Breast epithelium (tissue), 4 donors: ENCODE measurements at regions of chr13 and their contacts with region 1.

Region 1: DNA sequence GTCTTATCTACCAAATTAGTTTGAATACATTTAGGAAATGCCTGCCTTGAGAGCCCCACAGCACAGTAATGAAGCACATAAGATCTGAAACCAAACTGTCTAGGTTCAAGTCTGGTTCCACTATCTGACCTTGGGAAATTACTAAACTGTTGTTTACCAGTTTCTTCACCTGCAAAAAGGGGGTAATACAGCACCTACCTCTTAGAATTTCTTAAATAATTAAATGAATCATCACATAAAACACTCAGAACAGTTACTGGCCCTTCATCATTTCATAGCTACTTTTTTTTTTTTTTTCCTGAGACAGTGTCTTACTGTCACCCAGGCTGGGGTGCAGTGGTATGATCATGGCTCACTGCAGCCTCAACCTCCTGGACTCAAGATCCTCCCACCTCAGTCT is 59.6 kb downstream of the USP12 start:
- DNase-seq: no peak
- H3K4me3 ChIP-seq: no peak overlapping the region
- H3K27ac ChIP-seq: no peak overlapping the region
- H3K4me1 ChIP-seq: no peaks in the 10 kb centered on the region
- H3K27me3 ChIP-seq: no peaks in the 10 kb centered on the region
- CTCF ChIP-seq: no peak
- POLR2A ChIP-seq: no peak

Region 2: GRCh38 chr13:26831336-26831908 is 280.6 kb before region 1 on chr13:
- intact Hi-C with region 1: no loop called
- DNase-seq: no peak
- H3K4me3 ChIP-seq: no peak overlapping the region
- H3K27ac ChIP-seq: no peak overlapping the region
- H3K4me1 ChIP-seq: no peaks in the 10 kb centered on the region
- H3K27me3 ChIP-seq: no peaks in the 10 kb centered on the region
- CTCF ChIP-seq: no peak
- POLR2A ChIP-seq: no peak

Region 3: GRCh38 chr13:26847281-26847680 is 264.7 kb before region 1 on chr13:
- intact Hi-C with region 1: loop called (anchors 5 kb)
- DNase-seq: no peak
- H3K4me3 ChIP-seq: no peak overlapping the region
- H3K27ac ChIP-seq: no peak overlapping the region
- H3K4me1 ChIP-seq: no peaks in the 10 kb centered on the region
- H3K27me3 ChIP-seq: no peaks in the 10 kb centered on the region
- CTCF ChIP-seq: no peak
- POLR2A ChIP-seq: no peak

Region 4: GRCh38 chr13:28229522-28230411 is 1117.8 kb after region 1 on chr13:
- intact Hi-C with region 1: no loop called
- DNase-seq: no peak
- H3K4me3 ChIP-seq: no peak overlapping the region
- H3K27ac ChIP-seq: no peak overlapping the region
- H3K4me1 ChIP-seq: no peaks in the 10 kb centered on the region
- H3K27me3 ChIP-seq: no peaks in the 10 kb centered on the region
- CTCF ChIP-seq: no peak
- POLR2A ChIP-seq: no peak